Activated CD4-positive, alpha-beta memory T cell treated with anti-CD3 and anti-CD28 coated beads, Interleukin-2, amount 10 ng/mL, durations not matched to agents 7 days and 5 days (primary cell): ENCODE measurements at regions of chr5 and their contacts with region 1.

Region 1: GRCh38 chr5:139517683-139518564 is 35.4 kb upstream of the STING1 start:
- DNase-seq: peak; percentile 92
- H3K4me3 Mint-ChIP-seq: peak overlapping the region; percentile 85
- H3K27ac Mint-ChIP-seq: peak overlapping the region; percentile 83
- H3K4me1 Mint-ChIP-seq: peaks cover 41% of the 10 kb centered on the region
- H3K27me3 Mint-ChIP-seq: peaks cover 2% of the 10 kb centered on the region

Region 2: GRCh38 chr5:139417214-139417613 is 100.7 kb before region 1 on chr5:
- CTCF ChIA-PET with region 1: interaction called, 329 read pairs
- POLR2A ChIA-PET with region 1: interaction called, 43 read pairs
- DNase-seq: no peak
- H3K4me3 Mint-ChIP-seq: no peak overlapping the region
- H3K27ac Mint-ChIP-seq: peak overlapping the region; percentile 93
- H3K4me1 Mint-ChIP-seq: peaks cover 83% of the 10 kb centered on the region
- H3K27me3 Mint-ChIP-seq: no peaks in the 10 kb centered on the region

Region 3: GRCh38 chr5:139439013-139439903 is 78.7 kb before region 1 on chr5 and contains the start of gene DNAJC18:
- CTCF ChIA-PET with region 1: interaction called, 40 read pairs
- POLR2A ChIA-PET with region 1: interaction called, 4 read pairs
- DNase-seq: peak; percentile 92
- H3K4me3 Mint-ChIP-seq: peak within 1 kb of the TSS; percentile 92
- H3K27ac Mint-ChIP-seq: peak within 1 kb of the TSS; percentile 98
- H3K4me1 Mint-ChIP-seq: peaks cover 70% of the 10 kb centered on the region
- H3K27me3 Mint-ChIP-seq: no peaks in the 10 kb centered on the region
- total RNA-seq, gene DNAJC18: 16.1 to 17.0 TPM

Region 4: GRCh38 chr5:139474890-139475791 is 42.8 kb before region 1 on chr5:
- CTCF ChIA-PET with region 1: interaction called, 46 read pairs
- POLR2A ChIA-PET with region 1: interaction called, 5 read pairs
- DNase-seq: no peak
- H3K4me3 Mint-ChIP-seq: peak overlapping the region; percentile 3
- H3K27ac Mint-ChIP-seq: peak overlapping the region; percentile 80
- H3K4me1 Mint-ChIP-seq: peaks cover 88% of the 10 kb centered on the region
- H3K27me3 Mint-ChIP-seq: no peaks in the 10 kb centered on the region

Region 5: DNA sequence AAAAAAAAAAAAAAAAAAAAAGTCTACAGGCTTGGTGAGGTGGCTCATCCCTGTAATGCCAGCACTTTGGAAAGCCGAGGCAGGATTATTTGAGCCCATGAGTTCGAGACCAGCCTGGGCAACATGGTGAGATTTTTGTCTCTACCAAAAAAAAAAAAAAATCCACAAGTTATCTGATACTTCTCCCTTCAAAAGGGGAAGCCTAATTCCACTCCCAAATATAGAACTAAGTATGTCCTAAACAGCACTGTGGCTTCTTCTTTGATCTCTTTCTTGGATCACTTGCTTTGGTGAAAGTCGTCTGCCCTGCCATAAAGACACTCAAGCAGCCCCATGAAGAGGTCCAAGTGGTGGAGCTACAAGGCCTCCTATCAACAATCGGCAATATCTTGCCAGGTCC is 16.5 kb before region 1 on chr5:
- CTCF ChIA-PET with region 1: interaction called, 28 read pairs
- POLR2A ChIA-PET with region 1: interaction called, 3 read pairs
- DNase-seq: no peak
- H3K4me3 Mint-ChIP-seq: no peak overlapping the region
- H3K27ac Mint-ChIP-seq: no peak overlapping the region
- H3K4me1 Mint-ChIP-seq: no peaks in the 10 kb centered on the region
- H3K27me3 Mint-ChIP-seq: peaks cover 9% of the 10 kb centered on the region

Region 6: DNA sequence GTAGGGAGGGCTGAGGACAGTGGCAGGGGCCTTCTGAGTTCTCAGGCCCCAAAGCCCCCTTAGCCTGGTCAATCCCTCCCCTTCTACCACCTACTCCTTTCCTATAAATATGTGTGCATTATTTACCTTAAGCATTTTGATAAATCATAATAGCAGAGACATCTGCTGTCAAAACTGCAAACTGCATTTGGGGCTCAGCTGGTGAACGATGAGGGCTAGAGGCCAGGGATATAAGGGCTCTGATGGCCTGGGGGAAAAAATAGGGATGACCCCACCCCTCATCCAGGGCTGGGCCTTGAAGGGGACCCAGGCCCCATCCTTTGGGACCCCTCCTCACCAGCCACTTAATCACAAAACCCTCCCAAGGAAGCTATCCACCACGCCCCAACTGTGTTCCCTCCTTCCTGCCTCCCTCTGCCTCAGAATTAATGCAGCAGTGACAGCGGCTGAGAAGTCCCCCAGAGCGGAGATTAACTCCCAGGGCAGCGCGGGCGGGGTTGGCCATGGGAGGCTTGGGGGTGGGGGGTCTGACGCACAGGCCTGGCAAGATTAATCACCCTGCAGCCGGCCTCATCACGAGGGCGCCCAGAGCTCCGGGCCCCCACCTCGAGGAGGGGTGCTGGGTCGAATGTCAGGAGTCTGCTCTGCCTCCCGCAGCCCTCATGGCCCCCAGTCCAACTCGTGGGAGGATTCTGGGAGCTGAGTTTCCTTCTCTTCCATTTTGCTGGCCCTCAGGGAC is 172.3 kb after region 1 on chr5:
- CTCF ChIA-PET with region 1: no interaction called
- POLR2A ChIA-PET with region 1: no interaction called
- DNase-seq: no peak
- H3K4me3 Mint-ChIP-seq: no peak overlapping the region
- H3K27ac Mint-ChIP-seq: no peak overlapping the region
- H3K4me1 Mint-ChIP-seq: no peaks in the 10 kb centered on the region
- H3K27me3 Mint-ChIP-seq: peaks cover 6% of the 10 kb centered on the region